ENCODE measurements at regions of chr2 and their contacts with region 1.

Region 1: GRCh38 chr2:224650815-224651439 is 65.2 kb downstream of the CCDC195 start:
- DNase-seq: peak; percentile 29 to 69
- ATAC-seq: peak; percentile 89 to 94
- H3K4me3 ChIP-seq: no peak overlapping the region
- H3K27ac ChIP-seq: no peak overlapping the region
- H3K4me1 ChIP-seq: no peaks in the 10 kb centered on the region
- CTCF ChIP-seq: peak; percentile 93
- EP300 ChIP-seq: no peak
- POLR2A ChIP-seq: no peak
- RAD21 ChIP-seq: peak; percentile 87 to 92

Region 2: DNA sequence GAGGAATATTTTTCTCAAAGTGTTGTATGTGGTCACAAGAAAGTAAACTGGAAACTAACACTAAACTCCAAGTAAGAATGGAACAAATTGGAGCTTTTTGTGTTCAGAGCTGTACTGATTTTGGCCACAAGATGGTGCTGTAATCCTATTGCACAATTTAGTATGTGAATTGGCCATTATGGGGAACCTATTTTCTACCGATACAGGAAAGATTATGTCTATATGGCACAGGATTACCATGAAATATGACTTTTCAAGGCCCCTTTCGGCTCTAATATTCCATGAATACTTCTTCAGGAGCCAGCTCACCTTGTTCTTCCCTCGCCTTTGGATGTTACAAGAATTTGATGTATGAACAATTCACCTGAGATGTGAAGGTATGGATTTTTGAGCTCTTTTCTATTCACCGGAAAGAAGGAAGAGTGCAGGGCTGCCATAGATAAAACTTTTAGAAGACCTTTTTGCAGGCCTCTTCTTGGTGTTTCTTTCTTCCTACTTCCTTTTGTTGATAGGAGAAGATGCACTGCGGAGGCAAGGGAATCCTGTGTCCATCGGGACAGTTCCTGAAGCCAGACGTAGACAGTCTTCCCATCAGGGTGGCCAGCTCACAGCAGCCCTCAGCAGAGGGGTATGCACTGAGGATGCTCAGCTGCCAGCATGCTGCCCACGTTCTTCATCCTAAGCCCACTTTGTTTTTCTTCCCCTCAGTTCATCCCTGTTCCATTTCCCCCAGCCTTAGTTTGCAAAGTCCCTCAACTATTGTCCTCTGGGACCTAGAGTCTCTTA is 680.4 kb before region 1 on chr2:
- CTCF ChIA-PET with region 1: interaction called, 17 read pairs
- POLR2A ChIA-PET with region 1: no interaction called
- DNase-seq: peak in 1 of 2 experiments; percentile 64
- ATAC-seq: peak; percentile 74 to 83; a peak in 5 of 6 replicates
- H3K4me3 ChIP-seq: no peak overlapping the region
- H3K27ac ChIP-seq: no peak overlapping the region
- H3K4me1 ChIP-seq: no peaks in the 10 kb centered on the region
- CTCF ChIP-seq: peak; percentile 96
- EP300 ChIP-seq: no peak
- POLR2A ChIP-seq: no peak
- RAD21 ChIP-seq: peak; percentile 93 to 96

Region 3: GRCh38 chr2:224357098-224357901 is 293.6 kb before region 1 on chr2:
- CTCF ChIA-PET with region 1: interaction called, 69 read pairs
- POLR2A ChIA-PET with region 1: no interaction called
- DNase-seq: peak; percentile 47 to 69
- ATAC-seq: peak; percentile 82 to 88
- H3K4me3 ChIP-seq: no peak overlapping the region
- H3K27ac ChIP-seq: no peak overlapping the region
- H3K4me1 ChIP-seq: no peaks in the 10 kb centered on the region
- CTCF ChIP-seq: peak; percentile 91
- EP300 ChIP-seq: no peak
- POLR2A ChIP-seq: no peak
- RAD21 ChIP-seq: peak; percentile 93

Region 4: GRCh38 chr2:224369028-224369632 is 281.8 kb before region 1 on chr2:
- CTCF ChIA-PET with region 1: interaction called, 19 read pairs
- POLR2A ChIA-PET with region 1: no interaction called
- DNase-seq: peak; percentile 15 to 47
- ATAC-seq: peak; percentile 64 to 78; a peak in 3 of 6 replicates
- H3K4me3 ChIP-seq: no peak overlapping the region
- H3K27ac ChIP-seq: no peak overlapping the region
- H3K4me1 ChIP-seq: no peaks in the 10 kb centered on the region
- CTCF ChIP-seq: peak; percentile 84
- EP300 ChIP-seq: no peak
- POLR2A ChIP-seq: no peak
- RAD21 ChIP-seq: peak; percentile 64 to 74

Region 5: DNA sequence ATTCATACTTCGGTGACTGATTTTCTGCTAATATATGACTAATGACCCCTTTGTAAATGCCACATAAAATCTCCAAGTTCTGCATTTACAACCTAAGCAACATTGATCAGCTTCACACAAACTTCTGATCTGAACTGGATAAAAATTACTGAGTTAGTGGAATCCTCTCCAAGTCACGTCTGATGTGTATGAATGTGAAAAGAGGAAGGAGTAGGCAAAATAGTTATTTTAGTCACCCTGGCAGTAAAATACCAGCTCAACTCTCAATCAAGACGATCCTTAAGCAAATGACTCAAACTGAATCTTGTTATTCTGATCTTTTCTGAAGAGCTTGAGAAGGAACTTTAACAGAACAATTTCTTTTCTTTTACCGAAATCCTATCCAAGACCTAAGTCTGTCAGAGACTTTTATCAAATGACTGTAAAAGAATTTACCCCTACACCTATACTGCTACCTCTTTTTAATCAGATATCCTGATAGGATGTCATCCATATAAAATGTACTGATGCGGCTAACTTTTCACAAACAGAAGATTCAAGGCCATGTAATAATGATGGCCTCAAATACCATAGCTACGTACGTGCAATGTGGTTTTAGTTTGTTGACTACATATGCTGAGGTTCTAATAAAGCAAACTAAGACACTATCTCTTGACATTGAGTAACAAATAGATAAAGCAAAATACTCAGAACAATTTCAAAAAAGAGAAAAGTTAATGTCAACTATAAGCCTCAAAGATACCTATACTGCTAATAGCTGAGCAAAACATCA is 89.5 kb before region 1 on chr2:
- CTCF ChIA-PET with region 1: no interaction called
- POLR2A ChIA-PET with region 1: no interaction called
- DNase-seq: no peak
- ATAC-seq: no peak
- H3K4me3 ChIP-seq: no peak overlapping the region
- H3K27ac ChIP-seq: no peak overlapping the region
- H3K4me1 ChIP-seq: peaks cover 5% of the 10 kb centered on the region; the same call in 1 of the 3 replicates
- CTCF ChIP-seq: no peak
- EP300 ChIP-seq: no peak
- POLR2A ChIP-seq: no peak
- RAD21 ChIP-seq: no peak

Region 6: DNA sequence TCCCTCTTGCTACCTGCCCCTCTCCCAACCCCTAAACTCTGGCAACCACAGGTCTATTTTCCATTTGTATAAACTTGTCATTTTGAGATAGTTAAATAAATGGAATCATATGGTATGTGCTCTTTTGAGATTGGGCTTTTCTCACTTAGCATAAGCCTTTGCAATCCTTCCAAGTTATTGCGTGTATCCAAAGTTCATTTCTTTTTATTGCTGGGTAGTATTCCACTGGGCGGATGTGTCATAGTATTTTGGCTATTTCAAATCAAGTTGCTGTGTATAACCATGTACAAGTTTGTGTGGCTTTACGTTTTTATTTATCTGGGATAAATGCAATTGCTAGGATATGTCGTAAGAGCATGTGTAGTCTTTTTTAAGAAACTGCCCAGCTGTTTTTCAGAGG is 10.2 kb before region 1 on chr2:
- CTCF ChIA-PET with region 1: interaction called, 11 read pairs
- POLR2A ChIA-PET with region 1: no interaction called
- DNase-seq: no peak
- ATAC-seq: no peak
- H3K4me3 ChIP-seq: no peak overlapping the region
- H3K27ac ChIP-seq: no peak overlapping the region
- H3K4me1 ChIP-seq: no peaks in the 10 kb centered on the region
- CTCF ChIP-seq: no peak
- EP300 ChIP-seq: no peak
- POLR2A ChIP-seq: no peak
- RAD21 ChIP-seq: no peak

Region 7: GRCh38 chr2:224666951-224667553 is 16.1 kb after region 1 on chr2:
- CTCF ChIA-PET with region 1: interaction called, 14 read pairs
- POLR2A ChIA-PET with region 1: no interaction called
- DNase-seq: no peak
- ATAC-seq: no peak
- H3K4me3 ChIP-seq: no peak overlapping the region
- H3K27ac ChIP-seq: no peak overlapping the region
- H3K4me1 ChIP-seq: no peaks in the 10 kb centered on the region
- CTCF ChIP-seq: no peak
- EP300 ChIP-seq: no peak
- POLR2A ChIP-seq: no peak
- RAD21 ChIP-seq: no peak

Region 8: DNA sequence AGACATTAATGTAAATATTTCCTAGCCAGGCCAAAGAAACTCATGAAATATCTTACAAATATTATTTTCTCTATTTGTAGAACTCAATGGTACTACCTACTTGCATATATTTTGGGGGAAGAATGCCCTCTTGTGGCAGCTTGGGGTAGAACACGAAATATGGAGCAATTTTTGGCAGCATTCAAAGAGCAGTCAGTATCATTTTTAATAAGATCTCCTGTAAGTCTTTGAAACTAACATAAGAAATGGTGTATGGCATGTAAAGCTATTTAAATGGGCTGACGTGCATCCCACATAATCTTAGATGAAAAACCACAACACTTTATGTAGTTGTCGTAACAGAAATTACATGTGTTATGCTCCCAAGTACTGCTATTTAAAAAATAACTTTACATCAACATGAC is 127.5 kb after region 1 on chr2:
- CTCF ChIA-PET with region 1: interaction called, 11 read pairs
- POLR2A ChIA-PET with region 1: no interaction called
- DNase-seq: peak; percentile 38 to 52
- ATAC-seq: peak; percentile 68 to 81; a peak in 4 of 6 replicates
- H3K4me3 ChIP-seq: no peak overlapping the region
- H3K27ac ChIP-seq: no peak overlapping the region
- H3K4me1 ChIP-seq: 0 out of 3 replicates have a peak, but pooled peaks cover 8% of the 10 kb centered on the region
- CTCF ChIP-seq: peak; percentile 85
- EP300 ChIP-seq: no peak
- POLR2A ChIP-seq: no peak
- RAD21 ChIP-seq: peak; percentile 75 to 85

Region 9: DNA sequence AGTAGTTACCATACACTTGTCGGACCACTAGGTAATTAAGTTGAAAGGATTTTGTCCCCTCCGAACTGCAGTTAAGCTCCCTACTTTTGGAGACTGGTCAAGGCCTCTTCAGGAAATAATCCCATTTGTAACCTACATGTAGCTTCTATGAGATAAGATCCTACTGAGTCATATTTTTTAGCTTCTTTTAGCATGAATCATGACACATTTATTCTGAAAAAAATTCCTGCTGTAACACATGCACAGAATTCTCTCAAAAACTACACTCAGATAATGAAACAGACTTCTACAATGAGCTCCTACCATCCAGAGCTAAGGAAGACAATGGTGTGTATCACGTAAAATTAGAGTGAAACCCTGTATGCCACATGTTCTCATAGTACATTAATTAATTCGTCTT is 165.9 kb after region 1 on chr2:
- CTCF ChIA-PET with region 1: no interaction called
- POLR2A ChIA-PET with region 1: no interaction called
- DNase-seq: peak; percentile 47 to 48
- ATAC-seq: peak; percentile 89 to 90
- H3K4me3 ChIP-seq: 0 out of 3 replicates have a peak overlapping the region, but pooled peaks have one; percentile 14
- H3K27ac ChIP-seq: peak overlapping the region; percentile 74 to 86
- H3K4me1 ChIP-seq: peaks cover 46% of the 10 kb centered on the region
- CTCF ChIP-seq: no peak
- EP300 ChIP-seq: no peak
- POLR2A ChIP-seq: no peak
- RAD21 ChIP-seq: no peak

Measured in A549 (cell line).